ENCODE measurements at regions of chr9 and their contacts with region 1.

Region 1: DNA sequence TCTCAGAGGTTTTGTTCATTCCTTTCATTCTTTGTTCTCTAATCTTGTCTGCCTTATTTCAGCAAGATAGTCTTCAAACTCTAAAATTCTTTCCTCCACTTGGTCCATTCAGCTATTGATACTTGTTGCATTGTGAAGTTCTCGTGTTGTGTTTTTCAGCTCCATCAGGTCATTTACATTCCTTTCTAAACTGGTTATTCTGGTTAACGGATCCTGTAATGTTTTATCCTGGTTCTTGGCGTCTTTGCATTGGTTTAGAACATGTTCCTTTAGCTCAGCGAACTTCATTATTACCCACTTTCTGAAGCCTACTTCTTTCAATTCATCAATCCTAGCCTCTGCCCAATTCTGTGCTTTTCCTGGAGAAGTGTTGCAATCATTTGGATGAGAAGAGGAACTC is 45.1 kb upstream of the TXNDC8 start:
- DNase-seq: no peak
- ATAC-seq: no peak
- H3K4me3 ChIP-seq: no peak overlapping the region
- H3K27ac ChIP-seq: no peak overlapping the region
- H3K4me1 ChIP-seq: no peaks in the 10 kb centered on the region
- H3K27me3 ChIP-seq: no peaks in the 10 kb centered on the region
- CTCF ChIP-seq: no peak
- POLR2A ChIP-seq: no peak

Region 2: GRCh38 chr9:110344821-110345220 is 37.9 kb before region 1 on chr9:
- intact Hi-C with region 1: loop called in 1 of 10 experiments (anchors 5 kb)
- DNase-seq: no peak
- ATAC-seq: no peak
- H3K4me3 ChIP-seq: no peak overlapping the region
- H3K27ac ChIP-seq: no peak overlapping the region
- H3K4me1 ChIP-seq: no peaks in the 10 kb centered on the region
- H3K27me3 ChIP-seq: no peaks in the 10 kb centered on the region
- CTCF ChIP-seq: no peak
- POLR2A ChIP-seq: no peak